Colonic mucosa (tissue), 4 donors: ENCODE measurements at regions of chr22 and their contacts with region 1.

Region 1: GRCh38 chr22:26321469-26321913 is 107.6 kb upstream of the ASPHD2 start:
- DNase-seq: no peak
- H3K4me3 ChIP-seq: no peak overlapping the region
- H3K27ac ChIP-seq: no peak overlapping the region
- H3K4me1 ChIP-seq: no peaks in the 10 kb centered on the region
- H3K27me3 ChIP-seq: no peaks in the 10 kb centered on the region
- CTCF ChIP-seq: no peak

Region 2: DNA sequence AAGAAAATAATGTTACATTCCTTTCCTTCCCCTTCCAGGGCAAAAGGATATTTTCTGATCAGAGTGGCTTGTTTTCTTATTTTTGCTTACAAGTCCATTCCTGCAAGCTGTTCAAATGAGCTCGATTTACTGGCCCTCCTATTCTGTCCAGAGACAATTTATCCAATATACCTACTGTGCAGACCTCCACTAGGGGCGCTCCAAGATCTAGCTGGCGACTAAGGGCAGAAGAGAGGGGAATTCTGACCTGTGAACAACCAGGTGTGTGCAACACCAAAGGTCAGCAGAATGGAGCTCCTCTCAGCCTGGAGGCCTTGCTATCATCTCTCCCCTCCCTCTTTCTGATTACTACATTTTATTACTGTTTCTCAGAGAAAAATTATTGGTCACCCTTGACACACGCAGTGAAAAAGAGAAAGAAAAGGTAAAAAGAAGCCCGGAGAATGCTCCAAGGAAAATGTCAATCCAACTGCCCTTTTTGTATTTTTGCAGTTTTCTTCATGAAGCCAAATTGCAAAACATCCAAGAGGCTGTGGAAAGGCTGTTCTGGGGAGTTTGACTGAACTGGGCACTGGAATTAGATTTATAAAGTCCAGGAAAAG is 149.0 kb before region 1 on chr22:
- intact Hi-C with region 1: loop called (anchors 10 kb)
- DNase-seq: peak; percentile 36
- H3K4me3 ChIP-seq: no peak overlapping the region
- H3K27ac ChIP-seq: no peak overlapping the region
- H3K4me1 ChIP-seq: no peaks in the 10 kb centered on the region
- H3K27me3 ChIP-seq: peaks cover 30% of the 10 kb centered on the region
- CTCF ChIP-seq: peak; percentile 45

Region 3: DNA sequence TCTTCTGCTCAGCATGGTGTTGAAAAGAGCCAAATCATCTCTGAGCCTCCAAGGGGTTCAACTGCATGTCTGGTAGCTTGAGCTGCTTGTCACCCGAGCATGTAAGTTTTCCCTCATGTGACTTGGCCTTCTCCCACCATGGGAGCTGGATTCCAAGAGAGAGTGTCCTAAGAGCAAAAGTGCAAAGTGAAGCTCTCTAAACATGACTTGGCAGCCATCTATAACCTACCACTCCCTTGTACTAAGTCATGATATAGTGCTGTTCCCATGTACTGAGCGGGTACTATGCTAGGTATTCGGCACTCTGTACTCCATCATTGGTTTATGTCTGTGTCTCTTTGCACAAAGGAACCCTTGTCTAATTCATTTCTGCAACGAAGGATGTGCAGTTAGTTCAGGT is 133.2 kb before region 1 on chr22:
- intact Hi-C with region 1: no loop called
- DNase-seq: no peak
- H3K4me3 ChIP-seq: no peak overlapping the region
- H3K27ac ChIP-seq: no peak overlapping the region
- H3K4me1 ChIP-seq: no peaks in the 10 kb centered on the region
- H3K27me3 ChIP-seq: no peaks in the 10 kb centered on the region
- CTCF ChIP-seq: no peak